Heart left ventricle (tissue), 16 donors: ENCODE measurements at regions of chr5 and their contacts with region 1.

Region 1: GRCh38 chr5:67809589-67809988 is 406.0 kb upstream of the PIK3R1 start:
- DNase-seq: no peak
- ATAC-seq: no peak
- H3K4me3 ChIP-seq: no peak overlapping the region
- H3K27ac ChIP-seq: peak overlapping the region in 11 of 12 donors; percentile 6 to 90 (median 78)
- H3K4me1 ChIP-seq: peaks cover 0 to 42% (median 19%) of the 10 kb centered on the region in 12 donors
- H3K27me3 ChIP-seq: no peaks in the 10 kb centered on the region
- CTCF ChIP-seq: no peak
- POLR2A ChIP-seq: no peak

Region 2: GRCh38 chr5:67493676-67494075 is 315.9 kb before region 1 on chr5:
- intact Hi-C with region 1: loop called in 1 of 10 experiments (anchors 5 kb)
- DNase-seq: peak; percentile 32 to 60 (median 43)
- ATAC-seq: peak; percentile 91 to 96 (median 94)
- H3K4me3 ChIP-seq: no peak overlapping the region
- H3K27ac ChIP-seq: peak overlapping the region in 1 of 12 donors; percentile 63
- H3K4me1 ChIP-seq: peaks cover 0 to 9% (median 0%) of the 10 kb centered on the region in 12 donors
- H3K27me3 ChIP-seq: no peaks in the 10 kb centered on the region
- CTCF ChIP-seq: peak; percentile 20 to 62 (median 46)
- POLR2A ChIP-seq: no peak

Region 3: DNA sequence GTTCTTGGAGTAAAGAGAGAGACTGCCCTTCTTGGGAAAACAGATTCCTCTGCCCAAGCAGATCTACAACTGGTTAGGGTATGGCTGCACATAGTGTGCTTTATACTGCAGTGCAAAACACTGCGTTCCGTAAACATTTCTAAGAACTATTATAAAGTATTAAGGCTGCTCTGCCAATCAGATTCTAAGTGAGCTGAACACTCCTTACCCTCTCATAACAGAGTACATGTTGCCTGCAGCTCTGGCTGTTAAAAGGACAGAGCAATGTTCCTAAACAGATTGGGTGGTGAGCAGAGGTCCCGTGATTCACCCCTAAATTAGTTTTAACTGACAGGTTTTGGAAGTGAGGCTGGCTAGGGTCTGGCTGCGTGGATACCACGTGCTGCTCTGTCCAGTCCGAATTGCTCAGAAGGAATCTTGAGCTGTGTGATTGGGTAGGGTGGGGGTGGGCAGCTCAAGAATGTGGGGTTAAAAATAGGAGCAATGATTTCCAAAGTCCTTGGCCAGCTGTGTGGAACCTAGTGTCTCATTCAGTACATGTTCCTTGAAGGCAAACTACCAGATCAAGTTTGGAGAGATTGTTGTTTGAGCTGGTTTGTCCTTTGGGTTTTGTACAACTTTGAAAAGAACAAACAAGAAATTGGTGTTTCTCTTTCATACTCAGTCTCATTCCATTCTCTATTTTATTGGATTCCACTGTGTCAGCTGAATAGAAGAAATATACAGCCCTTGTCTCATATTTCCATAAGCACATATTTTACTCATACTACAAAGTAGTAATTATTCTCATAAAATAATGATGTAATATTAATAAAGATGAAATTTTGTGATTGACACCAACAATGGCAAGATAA is 115.4 kb before region 1 on chr5:
- intact Hi-C with region 1: loop called in 7 of 10 experiments (anchors 2 to 10 kb)
- DNase-seq: peak; percentile 49 to 84 (median 65)
- ATAC-seq: peak; percentile 96 to 98 (median 98)
- H3K4me3 ChIP-seq: no peak overlapping the region
- H3K27ac ChIP-seq: peak overlapping the region; percentile 38 to 93 (median 78)
- H3K4me1 ChIP-seq: peaks cover 0 to 20% (median 9%) of the 10 kb centered on the region in 12 donors
- H3K27me3 ChIP-seq: no peaks in the 10 kb centered on the region
- CTCF ChIP-seq: no peak
- POLR2A ChIP-seq: no peak

Region 4: DNA sequence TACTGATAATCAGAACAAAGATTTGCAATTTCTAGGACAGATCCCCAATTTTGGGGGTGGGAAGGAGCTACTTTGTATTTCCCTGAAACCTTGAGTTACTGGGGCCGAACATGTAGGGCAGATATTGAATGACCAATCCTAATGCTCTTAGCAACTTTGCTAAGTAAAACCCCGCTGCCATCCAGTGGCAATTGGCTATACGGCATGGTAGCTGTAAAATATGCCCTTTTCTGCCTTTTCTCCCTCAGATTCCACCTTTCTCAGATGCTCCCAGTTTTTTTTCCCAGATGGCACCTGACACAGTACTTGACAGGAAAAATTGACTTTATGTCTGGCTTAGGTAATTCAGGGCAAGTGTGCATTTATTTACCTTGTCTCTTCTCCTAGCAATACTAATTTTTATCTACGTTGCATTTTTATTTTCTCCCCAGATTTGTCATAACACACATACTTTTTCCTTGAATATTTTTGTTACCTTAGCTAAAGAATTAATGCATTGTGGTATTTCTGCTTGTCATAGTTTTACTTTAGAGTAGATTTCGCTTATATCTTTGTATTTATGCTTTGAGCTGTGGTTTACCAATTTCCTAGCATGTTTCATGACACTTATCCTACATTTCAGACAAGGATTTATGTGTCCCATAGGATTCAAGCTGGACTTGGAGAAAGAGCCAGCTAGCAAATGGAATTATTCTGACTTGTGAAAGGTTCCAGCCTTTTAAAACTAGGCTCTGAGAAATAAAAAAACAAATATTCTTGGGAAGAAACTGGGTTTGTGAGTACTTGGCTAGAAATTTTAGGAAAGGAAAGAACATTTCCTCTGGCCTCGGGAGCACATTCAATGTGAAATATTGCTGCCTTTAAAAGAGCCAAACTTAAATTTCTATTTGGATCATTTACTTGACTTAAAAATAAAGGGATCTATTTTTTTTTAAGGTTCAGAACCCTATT is 443.4 kb after region 1 on chr5:
- intact Hi-C with region 1: loop called in 4 of 10 experiments (anchors 10 kb)
- DNase-seq: peak in 4 of 5 donors; percentile 50 to 61 (median 60)
- ATAC-seq: peak; percentile 37 to 79 (median 74)
- H3K4me3 ChIP-seq: peak overlapping the region in 6 of 12 donors; percentile 1 to 24 (median 8)
- H3K27ac ChIP-seq: peak overlapping the region; percentile 21 to 85 (median 77)
- H3K4me1 ChIP-seq: peaks cover 9 to 100% (median 98%) of the 10 kb centered on the region in 12 donors
- H3K27me3 ChIP-seq: no peaks in the 10 kb centered on the region
- CTCF ChIP-seq: peak; percentile 53 to 83 (median 76)
- POLR2A ChIP-seq: no peak

Region 5: GRCh38 chr5:68272289-68272688 is 462.7 kb after region 1 on chr5:
- intact Hi-C with region 1: loop called in 1 of 10 experiments (anchors 5 kb)
- DNase-seq: no peak
- ATAC-seq: no peak
- H3K4me3 ChIP-seq: no peak overlapping the region
- H3K27ac ChIP-seq: peak overlapping the region in 9 of 12 donors; percentile 56 to 86 (median 65)
- H3K4me1 ChIP-seq: peaks cover 0 to 90% (median 69%) of the 10 kb centered on the region in 12 donors
- H3K27me3 ChIP-seq: no peaks in the 10 kb centered on the region
- CTCF ChIP-seq: peak in 11 of 12 donors; percentile 27 to 58 (median 42)
- POLR2A ChIP-seq: no peak